CD8-positive, alpha-beta memory T cell (primary cell): ENCODE measurements at regions of chr16 and their contacts with region 1.

Region 1: DNA sequence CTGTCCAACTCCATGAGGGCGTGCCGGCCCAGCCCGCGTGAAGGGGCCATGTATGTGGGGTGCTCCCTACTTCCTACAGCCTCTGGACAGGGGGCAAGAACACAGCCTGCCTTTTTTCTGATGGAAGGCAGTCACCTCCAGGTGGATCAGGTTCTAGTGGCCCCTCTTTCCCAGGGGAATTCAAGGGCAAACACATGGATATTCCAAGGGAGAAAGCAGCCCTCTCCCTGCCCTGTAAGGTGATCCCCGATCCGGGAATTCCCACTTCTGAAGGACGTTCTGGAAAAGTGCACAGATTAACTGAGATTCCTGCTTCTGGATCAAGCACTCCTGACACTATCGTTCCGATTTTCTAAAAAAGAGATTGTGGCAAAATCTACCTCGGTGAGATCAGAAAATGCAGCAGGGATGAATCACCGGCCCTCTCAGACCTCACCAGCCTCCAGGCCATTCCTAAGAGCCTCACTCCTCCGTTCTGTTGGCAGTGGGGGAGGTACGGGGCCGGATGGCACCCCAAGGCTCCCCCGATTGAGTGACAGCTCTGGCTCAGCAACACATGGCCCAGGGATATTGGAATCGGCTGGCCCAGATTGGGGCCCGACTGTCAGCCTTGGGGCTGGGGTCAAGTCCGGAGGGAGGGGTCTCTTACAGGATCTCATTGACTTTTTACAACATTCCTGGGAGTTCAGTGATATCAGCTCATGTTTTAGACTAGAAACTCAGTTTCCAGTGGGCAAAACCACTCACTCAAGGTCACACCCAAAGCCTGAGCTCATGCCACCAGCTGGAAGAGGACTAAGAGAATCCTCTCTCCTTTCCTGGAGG is 12.3 kb downstream of the STX1B start:
- DNase-seq: no peak
- H3K4me3 ChIP-seq: no peak overlapping the region
- H3K4me3 Mint-ChIP-seq: peak overlapping the region in 5 of 7 donors; percentile 47 to 92 (median 85)
- H3K27ac ChIP-seq: no peak overlapping the region
- H3K27ac Mint-ChIP-seq: peak overlapping the region in 2 of 8 donors; percentile 24 to 38
- H3K4me1 ChIP-seq: peaks cover 13% of the 10 kb centered on the region
- H3K4me1 Mint-ChIP-seq: peaks cover 0 to 9% (median 6%) of the 10 kb centered on the region in 3 donors
- H3K27me3 ChIP-seq: no peaks in the 10 kb centered on the region
- H3K27me3 Mint-ChIP-seq: no peaks in the 10 kb centered on the region

Region 2: GRCh38 chr16:30984669-30985400 is 13.3 kb before region 1 on chr16 and contains the start of gene HSD3B7:
- CTCF ChIA-PET with region 1: interaction called, 12 read pairs
- POLR2A ChIA-PET with region 1: no interaction called
- DNase-seq: peak; percentile 63 to 84 (median 75)
- H3K4me3 ChIP-seq: no peak within 1 kb of the TSS
- H3K4me3 Mint-ChIP-seq: no peak within 1 kb of the TSS
- H3K27ac ChIP-seq: no peak within 1 kb of the TSS
- H3K27ac Mint-ChIP-seq: no peak within 1 kb of the TSS
- H3K4me1 ChIP-seq: no peaks in the 10 kb centered on the region
- H3K4me1 Mint-ChIP-seq: peaks cover 0 to 6% (median 0%) of the 10 kb centered on the region in 3 donors
- H3K27me3 ChIP-seq: no peaks in the 10 kb centered on the region
- H3K27me3 Mint-ChIP-seq: no peaks in the 10 kb centered on the region
- total RNA-seq, gene HSD3B7: 1.6 to 2.1 TPM